ENCODE measurements at regions of chr14 and their contacts with region 1.

Region 1: GRCh38 chr14:94026173-94026888 is at the start of gene OTUB2:
- DNase-seq: peak; percentile 91 to 97 (median 95)
- H3K4me3 ChIP-seq: peak within 1 kb of the TSS; percentile 33 to 77 (median 71)
- H3K4me3 Mint-ChIP-seq: peak within 1 kb of the TSS; percentile 69 to 81
- H3K27ac ChIP-seq: peak within 1 kb of the TSS in 1 of 2 donors; percentile 63
- H3K27ac Mint-ChIP-seq: peak within 1 kb of the TSS in 2 of 7 donors; percentile 62 to 73
- H3K4me1 ChIP-seq: peaks cover 36 to 44% of the 10 kb centered on the region in 2 donors
- H3K4me1 Mint-ChIP-seq: peaks cover 45% of the 10 kb centered on the region
- H3K27me3 ChIP-seq: no peaks in the 10 kb centered on the region
- H3K27me3 Mint-ChIP-seq: peaks cover 2 to 12% (median 3%) of the 10 kb centered on the region in 3 donors
- CTCF ChIP-seq: no peak
- polyA plus RNA-seq, gene OTUB2: 0.25 to 0.95 (median 0.28) TPM

Region 2: GRCh38 chr14:93811676-93812075 is 214.7 kb before region 1 on chr14:
- intact Hi-C with region 1: no loop called
- DNase-seq: no peak
- H3K4me3 ChIP-seq: no peak overlapping the region
- H3K4me3 Mint-ChIP-seq: no peak overlapping the region
- H3K27ac ChIP-seq: no peak overlapping the region
- H3K27ac Mint-ChIP-seq: no peak overlapping the region
- H3K4me1 ChIP-seq: no peaks in the 10 kb centered on the region
- H3K4me1 Mint-ChIP-seq: no peaks in the 10 kb centered on the region
- H3K27me3 ChIP-seq: no peaks in the 10 kb centered on the region
- H3K27me3 Mint-ChIP-seq: peaks cover 2 to 3% (median 2%) of the 10 kb centered on the region in 3 donors
- CTCF ChIP-seq: no peak

Region 3: GRCh38 chr14:94080471-94081289 is 54.3 kb after region 1 on chr14 and contains the start of gene DDX24:
- intact Hi-C with region 1: loop called in 1 of 2 experiments (anchors 5 kb)
- DNase-seq: peak; percentile 92 to 94 (median 93)
- H3K4me3 ChIP-seq: peak within 1 kb of the TSS; percentile 81 to 93 (median 83)
- H3K4me3 Mint-ChIP-seq: peak within 1 kb of the TSS; percentile 100
- H3K27ac ChIP-seq: peak within 1 kb of the TSS; percentile 81 to 87
- H3K27ac Mint-ChIP-seq: peak within 1 kb of the TSS; percentile 91 to 99 (median 96)
- H3K4me1 ChIP-seq: peaks cover 31 to 44% of the 10 kb centered on the region in 2 donors
- H3K4me1 Mint-ChIP-seq: peaks cover 41% of the 10 kb centered on the region
- H3K27me3 ChIP-seq: no peaks in the 10 kb centered on the region
- H3K27me3 Mint-ChIP-seq: peaks cover 0 to 2% (median 0%) of the 10 kb centered on the region in 3 donors
- CTCF ChIP-seq: no peak
- polyA plus RNA-seq, gene DDX24: 51.2 to 68.0 (median 53.8) TPM

Region 4: DNA sequence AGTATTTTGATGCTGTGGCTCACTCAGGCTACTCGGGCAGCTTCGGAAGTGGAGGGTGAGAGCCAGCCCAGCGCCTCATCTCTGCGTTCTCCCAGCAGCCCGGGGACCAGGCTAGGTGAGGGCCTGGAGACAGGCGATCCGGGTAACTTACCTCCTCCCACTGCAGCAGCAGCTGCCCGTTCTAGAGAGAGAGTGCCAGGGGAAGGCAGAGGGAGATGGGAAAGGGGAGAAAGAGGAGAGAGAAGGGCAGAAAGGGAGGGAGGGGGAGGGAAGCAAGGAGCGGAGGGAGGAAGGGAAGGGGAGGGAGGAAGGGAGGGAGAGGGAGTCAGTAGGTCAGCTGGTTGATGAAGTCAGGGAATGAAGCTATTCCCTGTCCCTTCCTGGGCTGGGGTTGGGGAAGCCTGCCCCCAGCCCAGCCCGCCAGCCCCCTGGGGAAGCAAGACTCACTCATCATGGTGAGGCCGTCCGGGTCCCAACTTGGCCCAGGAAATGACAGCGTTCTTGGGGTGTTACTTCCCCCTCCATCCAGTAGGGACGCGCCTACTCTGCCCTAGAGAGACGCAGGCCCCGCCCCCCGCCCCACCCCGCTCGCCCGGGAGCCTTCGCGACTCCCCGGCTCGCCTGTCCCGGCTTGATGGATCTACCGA is 102.9 kb after region 1 on chr14 and contains the start of gene IFI27L2:
- intact Hi-C with region 1: loop called in 1 of 2 experiments (anchors 5 kb)
- DNase-seq: peak; percentile 71 to 77 (median 77)
- H3K4me3 ChIP-seq: peak within 1 kb of the TSS; percentile 50 to 79 (median 78)
- H3K4me3 Mint-ChIP-seq: peak within 1 kb of the TSS; percentile 86 to 94
- H3K27ac ChIP-seq: peak within 1 kb of the TSS in 1 of 2 donors; percentile 74
- H3K27ac Mint-ChIP-seq: peak within 1 kb of the TSS; percentile 68 to 93 (median 82)
- H3K4me1 ChIP-seq: peaks cover 13 to 24% of the 10 kb centered on the region in 2 donors
- H3K4me1 Mint-ChIP-seq: peaks cover 16% of the 10 kb centered on the region
- H3K27me3 ChIP-seq: peaks cover 0 to 8% of the 10 kb centered on the region in 2 donors
- H3K27me3 Mint-ChIP-seq: peaks cover 6 to 13% (median 12%) of the 10 kb centered on the region in 3 donors
- CTCF ChIP-seq: peak; percentile 18
- polyA plus RNA-seq, gene IFI27L2: 55.4 to 156 (median 96.1) TPM

Measured in CD14-positive monocyte (primary cell).